ENCODE measurements at regions of chr3 and their contacts with region 1.

Region 1: DNA sequence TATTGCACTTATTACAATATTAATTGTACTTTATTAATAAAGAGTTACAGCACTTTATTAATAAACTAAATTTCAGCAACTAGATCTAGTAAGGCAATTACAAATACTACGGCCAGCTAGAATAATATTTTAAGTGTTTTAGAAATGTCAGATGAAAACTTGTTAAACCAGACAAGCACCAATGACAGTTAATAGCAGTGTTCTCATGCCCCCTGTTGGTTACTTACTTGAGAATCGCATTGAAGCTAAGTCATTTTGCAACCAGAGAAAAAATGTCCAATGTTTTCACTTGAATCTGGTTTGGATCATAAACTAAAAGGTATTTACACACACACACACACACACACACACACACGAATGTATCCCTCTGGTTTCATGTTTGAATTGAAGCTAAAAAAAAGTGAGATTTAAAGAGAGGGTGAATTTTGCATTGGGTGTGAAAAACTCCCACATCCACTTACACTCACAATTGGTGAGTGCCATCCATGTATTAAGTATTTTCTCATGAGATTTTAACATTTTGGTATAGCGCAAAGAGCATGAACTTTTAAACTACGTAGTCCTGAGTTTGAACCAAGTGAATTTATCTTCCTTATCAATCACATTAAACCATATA is 347.7 kb downstream of the ZBBX start:
- DNase-seq: peak; percentile 31 to 52
- H3K4me3 ChIP-seq: no peak overlapping the region
- H3K27ac ChIP-seq: no peak overlapping the region
- H3K4me1 ChIP-seq: no peaks in the 10 kb centered on the region
- H3K27me3 ChIP-seq: no peaks in the 10 kb centered on the region
- CTCF ChIP-seq: peak; percentile 82

Region 2: GRCh38 chr3:165206454-165207266 is 1825.7 kb before region 1 on chr3:
- CTCF ChIA-PET with region 1: interaction called, 3 read pairs
- POLR2A ChIA-PET with region 1: no interaction called
- intact Hi-C with region 1: loop called (anchors 2 kb)
- DNase-seq: peak; percentile 62 to 70
- H3K4me3 ChIP-seq: peak overlapping the region; percentile 20; the same call in 1 of the 2 replicates
- H3K27ac ChIP-seq: no peak overlapping the region
- H3K4me1 ChIP-seq: no peaks in the 10 kb centered on the region
- H3K27me3 ChIP-seq: no peaks in the 10 kb centered on the region
- CTCF ChIP-seq: peak; percentile 79

Region 3: GRCh38 chr3:165339753-165340152 is 1692.6 kb before region 1 on chr3:
- CTCF ChIA-PET with region 1: no interaction called
- POLR2A ChIA-PET with region 1: no interaction called
- intact Hi-C with region 1: loop called (anchors 2 kb)
- DNase-seq: no peak
- H3K4me3 ChIP-seq: no peak overlapping the region
- H3K27ac ChIP-seq: no peak overlapping the region
- H3K4me1 ChIP-seq: no peaks in the 10 kb centered on the region
- H3K27me3 ChIP-seq: no peaks in the 10 kb centered on the region
- CTCF ChIP-seq: peak; percentile 64

Region 4: GRCh38 chr3:166013073-166013679 is 1019.2 kb before region 1 on chr3:
- CTCF ChIA-PET with region 1: no interaction called
- POLR2A ChIA-PET with region 1: no interaction called
- intact Hi-C with region 1: loop called (anchors 2 kb)
- DNase-seq: peak in 1 of 2 experiments; percentile 11
- H3K4me3 ChIP-seq: no peak overlapping the region
- H3K27ac ChIP-seq: no peak overlapping the region
- H3K4me1 ChIP-seq: no peaks in the 10 kb centered on the region
- H3K27me3 ChIP-seq: no peaks in the 10 kb centered on the region
- CTCF ChIP-seq: peak; percentile 82

Region 5: DNA sequence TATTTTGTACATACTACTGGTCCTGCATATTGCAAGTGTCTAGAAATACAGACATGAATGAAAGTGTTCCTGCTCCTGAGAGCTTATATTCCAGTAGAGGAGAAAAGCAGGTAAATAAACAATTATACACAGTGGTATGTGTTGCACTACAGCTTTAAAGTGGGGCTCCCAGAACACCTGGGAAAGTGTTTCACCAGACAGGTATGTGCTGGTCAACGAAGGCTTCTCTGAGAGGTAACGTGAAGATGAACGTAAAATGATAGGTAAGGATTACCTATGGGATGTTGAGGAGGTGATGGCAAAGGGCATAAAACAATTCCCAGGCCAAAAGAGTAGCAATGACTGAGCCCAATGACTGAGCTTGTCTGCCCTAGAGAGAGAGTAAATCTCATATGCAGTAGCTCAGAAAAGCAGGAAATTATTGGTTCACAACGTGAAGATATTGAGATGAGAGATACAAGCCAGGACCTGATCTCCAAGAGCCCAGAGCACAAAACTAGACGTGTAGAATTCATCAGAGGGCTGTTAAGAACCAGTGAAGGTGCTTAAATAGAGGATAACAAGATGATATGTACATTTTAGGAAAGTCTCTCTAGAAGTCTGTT is 736.1 kb before region 1 on chr3:
- CTCF ChIA-PET with region 1: no interaction called
- POLR2A ChIA-PET with region 1: no interaction called
- intact Hi-C with region 1: no loop called
- DNase-seq: no peak
- H3K4me3 ChIP-seq: no peak overlapping the region
- H3K27ac ChIP-seq: no peak overlapping the region
- H3K4me1 ChIP-seq: peaks cover 2% of the 10 kb centered on the region; the same call in 1 of the 2 replicates
- H3K27me3 ChIP-seq: no peaks in the 10 kb centered on the region
- CTCF ChIP-seq: no peak

Region 6: DNA sequence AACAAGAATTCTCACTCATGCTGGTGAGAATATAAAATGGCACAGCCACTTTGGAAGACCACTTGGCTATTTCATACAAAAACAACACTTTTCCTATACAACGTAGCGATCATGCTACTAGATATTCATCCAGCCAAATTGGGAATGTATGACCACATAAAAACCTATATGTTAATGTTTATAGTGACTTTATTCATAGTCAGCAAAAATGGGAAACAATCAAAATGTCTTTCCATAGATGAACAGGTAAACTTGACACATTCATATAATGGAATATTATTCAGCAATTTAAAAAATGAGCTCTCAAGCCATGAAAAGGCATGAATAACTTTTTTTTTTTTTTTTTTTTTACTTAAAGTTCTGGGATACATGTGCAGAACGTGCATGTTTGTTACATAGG is 97.5 kb before region 1 on chr3:
- CTCF ChIA-PET with region 1: no interaction called
- POLR2A ChIA-PET with region 1: no interaction called
- intact Hi-C with region 1: loop called (anchors 1 kb)
- DNase-seq: no peak
- H3K4me3 ChIP-seq: no peak overlapping the region
- H3K27ac ChIP-seq: no peak overlapping the region
- H3K4me1 ChIP-seq: no peaks in the 10 kb centered on the region
- H3K27me3 ChIP-seq: no peaks in the 10 kb centered on the region
- CTCF ChIP-seq: no peak

Region 7: DNA sequence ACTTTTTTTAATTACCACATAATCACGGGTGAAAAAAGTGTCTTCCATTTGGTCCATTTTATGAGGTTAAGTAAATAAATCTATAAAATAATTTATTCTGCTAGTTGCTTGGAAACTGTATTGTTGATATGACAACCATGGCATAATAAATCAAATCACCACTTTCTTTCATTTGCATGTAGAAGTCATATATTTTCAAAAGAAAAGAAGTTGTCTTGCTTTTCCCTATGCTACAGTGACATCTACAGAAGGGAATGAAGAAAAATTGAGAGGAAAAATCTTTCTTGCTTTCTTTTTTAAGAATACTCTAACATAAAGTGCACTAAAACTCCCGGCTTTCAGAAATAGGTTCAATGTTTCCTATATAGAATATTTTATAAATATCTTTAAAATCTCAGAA is 119.3 kb after region 1 on chr3:
- CTCF ChIA-PET with region 1: no interaction called
- POLR2A ChIA-PET with region 1: no interaction called
- intact Hi-C with region 1: no loop called
- DNase-seq: no peak
- H3K4me3 ChIP-seq: no peak overlapping the region
- H3K27ac ChIP-seq: no peak overlapping the region
- H3K4me1 ChIP-seq: no peaks in the 10 kb centered on the region
- H3K27me3 ChIP-seq: no peaks in the 10 kb centered on the region
- CTCF ChIP-seq: no peak

Measured in PC-9 (cell line).